SK-N-SH (cell line): ENCODE measurements at regions of chr5 and their contacts with region 1.

Region 1: GRCh38 chr5:37412515-37413277 is 33.6 kb downstream of the WDR70 start:
- DNase-seq: peak; percentile 83
- H3K4me3 ChIP-seq: peak overlapping the region in 1 of 2 experiments; percentile 54; a peak in 1 of 4 replicates
- H3K27ac ChIP-seq: peak overlapping the region in 1 of 2 experiments; percentile 9; a peak in 1 of 4 replicates
- H3K4me1 ChIP-seq: peaks cover 0 to 3% of the 10 kb centered on the region in 2 experiments; a peak in 1 of 4 replicates
- H3K27me3 ChIP-seq: no peaks in the 10 kb centered on the region
- CTCF ChIP-seq: peak; percentile 99
- EP300 ChIP-seq: no peak
- RAD21 ChIP-seq: peak; percentile 80

Region 2: GRCh38 chr5:37080697-37081096 is 332.0 kb before region 1 on chr5:
- CTCF ChIA-PET with region 1: no interaction called
- POLR2A ChIA-PET with region 1: no interaction called
- DNase-seq: no peak
- H3K4me3 ChIP-seq: no peak overlapping the region
- H3K27ac ChIP-seq: no peak overlapping the region
- H3K4me1 ChIP-seq: peaks cover 0 to 8% of the 10 kb centered on the region in 2 experiments; a peak in 1 of 4 replicates
- H3K27me3 ChIP-seq: no peaks in the 10 kb centered on the region
- CTCF ChIP-seq: no peak
- EP300 ChIP-seq: no peak
- RAD21 ChIP-seq: no peak

Region 3: GRCh38 chr5:37198842-37199241 is 213.9 kb before region 1 on chr5:
- CTCF ChIA-PET with region 1: no interaction called
- POLR2A ChIA-PET with region 1: no interaction called
- DNase-seq: no peak
- H3K4me3 ChIP-seq: no peak overlapping the region
- H3K27ac ChIP-seq: no peak overlapping the region
- H3K4me1 ChIP-seq: no peaks in the 10 kb centered on the region
- H3K27me3 ChIP-seq: no peaks in the 10 kb centered on the region
- CTCF ChIP-seq: no peak
- EP300 ChIP-seq: no peak
- RAD21 ChIP-seq: no peak

Region 4: DNA sequence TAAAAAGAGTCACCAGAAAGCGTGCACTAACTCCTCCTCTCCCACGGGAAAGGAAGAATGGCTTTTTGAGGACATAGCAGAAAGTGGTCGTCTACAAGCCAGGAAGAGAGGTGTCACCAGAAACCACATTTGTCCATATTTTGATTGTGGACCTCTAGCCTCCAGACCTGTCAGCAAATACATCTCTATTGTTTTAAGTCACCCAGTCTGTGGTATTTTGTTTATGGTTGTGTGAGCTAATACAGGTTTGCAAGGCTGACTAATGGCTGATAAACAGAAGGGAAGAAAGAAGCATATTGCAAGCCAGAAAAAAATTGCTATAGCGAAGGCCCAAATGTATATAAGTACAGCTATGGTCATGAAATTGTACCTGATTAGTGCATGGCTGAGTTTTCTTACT is 12.2 kb before region 1 on chr5:
- CTCF ChIA-PET with region 1: interaction called, 15 read pairs
- POLR2A ChIA-PET with region 1: no interaction called
- DNase-seq: no peak
- H3K4me3 ChIP-seq: no peak overlapping the region
- H3K27ac ChIP-seq: no peak overlapping the region
- H3K4me1 ChIP-seq: no peaks in the 10 kb centered on the region
- H3K27me3 ChIP-seq: no peaks in the 10 kb centered on the region
- CTCF ChIP-seq: no peak
- EP300 ChIP-seq: no peak
- RAD21 ChIP-seq: no peak

Region 5: DNA sequence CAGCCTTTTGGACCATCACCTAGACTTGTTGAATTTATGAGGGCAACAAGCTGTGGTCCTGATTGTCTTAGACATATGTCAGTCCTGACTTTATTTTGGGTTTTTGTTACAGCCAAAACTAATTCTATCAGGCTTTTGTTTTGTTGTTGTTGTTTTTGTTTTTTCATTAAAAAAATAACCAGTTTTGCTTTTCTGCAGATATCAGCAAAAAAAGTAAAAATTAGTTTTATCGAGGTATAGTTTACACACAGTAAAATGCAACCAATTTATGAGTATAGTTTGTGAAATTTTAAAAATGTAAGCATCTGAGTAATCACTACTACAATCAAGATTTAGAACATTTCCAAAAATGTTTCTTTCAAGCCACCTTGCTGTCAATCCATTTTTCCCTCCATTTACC is 15.3 kb after region 1 on chr5:
- CTCF ChIA-PET with region 1: interaction called, 11 read pairs
- POLR2A ChIA-PET with region 1: no interaction called
- DNase-seq: no peak
- H3K4me3 ChIP-seq: no peak overlapping the region
- H3K27ac ChIP-seq: no peak overlapping the region
- H3K4me1 ChIP-seq: no peaks in the 10 kb centered on the region
- H3K27me3 ChIP-seq: no peaks in the 10 kb centered on the region
- CTCF ChIP-seq: no peak
- EP300 ChIP-seq: no peak
- RAD21 ChIP-seq: no peak

Region 6: DNA sequence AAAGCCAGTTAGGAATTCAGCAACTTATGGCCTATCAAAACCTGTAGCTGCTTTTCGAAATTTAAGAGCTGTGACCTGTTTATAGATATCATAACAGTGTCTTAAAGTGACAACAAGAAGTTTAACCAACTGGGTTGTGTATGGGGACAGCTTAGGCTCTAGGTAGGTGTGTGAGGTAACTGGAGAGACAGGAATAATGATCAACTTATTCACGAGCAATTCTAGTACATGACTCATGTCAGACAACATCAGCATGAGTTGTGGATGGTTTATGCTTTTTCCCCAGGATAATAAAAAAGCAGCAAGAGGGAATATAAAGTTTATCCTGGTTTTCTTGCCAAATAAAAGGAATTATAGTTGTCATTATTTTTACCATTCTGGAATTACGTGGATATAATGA is 338.5 kb after region 1 on chr5:
- CTCF ChIA-PET with region 1: no interaction called
- POLR2A ChIA-PET with region 1: no interaction called
- DNase-seq: no peak
- H3K4me3 ChIP-seq: no peak overlapping the region
- H3K27ac ChIP-seq: peak overlapping the region in 1 of 2 experiments; percentile 41; a peak in 2 of 4 replicates
- H3K4me1 ChIP-seq: peaks cover 0 to 13% of the 10 kb centered on the region in 2 experiments; a peak in 1 of 4 replicates
- H3K27me3 ChIP-seq: no peaks in the 10 kb centered on the region
- CTCF ChIP-seq: no peak
- EP300 ChIP-seq: no peak
- RAD21 ChIP-seq: no peak

Region 7: DNA sequence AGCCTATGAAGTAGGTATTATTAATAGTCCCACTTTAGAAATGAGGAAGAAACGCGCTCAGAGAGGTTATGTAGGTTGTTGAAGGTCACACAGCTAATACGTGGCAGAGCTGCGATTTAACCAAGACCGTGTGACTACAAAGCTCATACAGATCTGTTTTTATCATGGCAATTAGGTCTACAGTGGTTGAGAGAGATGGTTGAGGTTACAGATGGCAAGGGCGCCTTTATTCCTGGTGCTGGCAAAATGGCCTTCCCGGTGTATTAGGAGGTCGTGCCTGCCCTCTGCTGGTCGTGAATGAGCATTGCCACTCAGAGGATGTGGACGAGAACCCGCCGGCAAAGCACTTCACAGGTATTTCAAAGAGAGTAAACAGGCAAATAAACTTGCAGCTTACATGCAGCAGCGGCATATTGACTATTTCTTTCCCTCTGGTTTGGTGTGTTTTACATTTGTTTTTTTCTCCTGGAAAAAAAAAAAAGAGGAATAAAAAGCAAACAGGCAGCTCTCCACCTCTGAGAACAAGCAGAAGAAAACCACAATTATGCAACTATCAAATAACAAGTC is 780.4 kb after region 1 on chr5:
- CTCF ChIA-PET with region 1: interaction called, 35 read pairs
- POLR2A ChIA-PET with region 1: no interaction called
- DNase-seq: peak; percentile 73
- H3K4me3 ChIP-seq: no peak overlapping the region; a peak in 1 of 4 replicates
- H3K27ac ChIP-seq: no peak overlapping the region
- H3K4me1 ChIP-seq: no peaks in the 10 kb centered on the region
- H3K27me3 ChIP-seq: peaks cover 20% of the 10 kb centered on the region; the same call in 1 of the 2 replicates
- CTCF ChIP-seq: peak; percentile 94
- EP300 ChIP-seq: no peak
- RAD21 ChIP-seq: peak; percentile 90